CD8-positive, alpha-beta T cell (primary cell): ENCODE measurements at regions of chr6 and their contacts with region 1.

Region 1: GRCh38 chr6:160015778-160016684 is 47.1 kb downstream of the IGF2R start:
- DNase-seq: peak in 7 of 9 experiments; percentile 10 to 68 (median 43)
- ATAC-seq: peak; percentile 70
- H3K4me3 ChIP-seq: no peak overlapping the region
- H3K4me3 Mint-ChIP-seq: peak overlapping the region; percentile 68
- H3K27ac ChIP-seq: peak overlapping the region; percentile 3 to 62
- H3K27ac Mint-ChIP-seq: peak overlapping the region; percentile 92
- H3K4me1 ChIP-seq: peaks cover 40% of the 10 kb centered on the region
- H3K4me1 Mint-ChIP-seq: peaks cover 47% of the 10 kb centered on the region
- H3K27me3 ChIP-seq: no peaks in the 10 kb centered on the region
- H3K27me3 Mint-ChIP-seq: no peaks in the 10 kb centered on the region
- CTCF ChIP-seq: no peak

Region 2: GRCh38 chr6:159989492-159990480 is 26.2 kb before region 1 on chr6:
- CTCF ChIA-PET with region 1: no interaction called
- POLR2A ChIA-PET with region 1: no interaction called
- intact Hi-C with region 1: loop called in 1 of 2 experiments (anchors 1 kb)
- DNase-seq: no peak
- ATAC-seq: no peak
- H3K4me3 ChIP-seq: no peak overlapping the region
- H3K4me3 Mint-ChIP-seq: no peak overlapping the region
- H3K27ac ChIP-seq: no peak overlapping the region
- H3K27ac Mint-ChIP-seq: no peak overlapping the region
- H3K4me1 ChIP-seq: peaks cover 24% of the 10 kb centered on the region
- H3K4me1 Mint-ChIP-seq: peaks cover 78% of the 10 kb centered on the region
- H3K27me3 ChIP-seq: no peaks in the 10 kb centered on the region
- H3K27me3 Mint-ChIP-seq: no peaks in the 10 kb centered on the region
- CTCF ChIP-seq: no peak